HCT116 (cell line): ENCODE measurements at regions of chr5 and their contacts with region 1.

Region 1: DNA sequence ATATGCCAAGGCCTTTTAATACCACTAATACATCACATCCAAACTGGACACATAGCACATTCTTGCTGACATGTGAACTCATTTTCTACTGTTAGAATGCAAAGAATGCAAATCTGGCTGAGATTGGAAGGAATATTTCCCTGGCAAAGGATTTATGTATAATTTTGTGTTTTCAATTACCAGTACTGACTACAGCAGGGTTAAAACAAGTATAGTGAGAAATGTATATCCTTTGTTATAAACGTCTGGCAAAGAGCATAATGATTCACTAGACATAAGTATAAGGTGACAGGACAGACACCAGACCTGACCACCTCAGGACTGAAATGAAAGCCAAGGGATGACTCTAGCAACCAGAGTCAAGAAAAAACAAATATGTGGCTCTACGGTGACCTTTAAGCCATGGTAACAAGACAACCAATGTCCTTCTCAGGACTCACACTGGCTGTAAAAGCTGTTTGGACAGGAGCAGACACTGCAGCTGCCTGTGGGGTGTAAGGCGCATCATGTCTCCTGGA is 95.0 kb downstream of the MRPS27 start:
- DNase-seq: no peak
- ATAC-seq: no peak
- H3K4me3 ChIP-seq: no peak overlapping the region
- H3K27ac ChIP-seq: no peak overlapping the region
- H3K4me1 ChIP-seq: no peaks in the 10 kb centered on the region
- H3K27me3 ChIP-seq: no peaks in the 10 kb centered on the region
- CTCF ChIP-seq: no peak
- POLR2A ChIP-seq: no peak
- RAD21 ChIP-seq: no peak

Region 2: GRCh38 chr5:71563166-71563565 is 661.8 kb before region 1 on chr5:
- CTCF ChIA-PET with region 1: no interaction called
- POLR2A ChIA-PET with region 1: no interaction called
- RAD21 ChIA-PET with region 1: no interaction called
- intact Hi-C with region 1: loop called (anchors 10 kb)
- DNase-seq: no peak
- ATAC-seq: no peak
- H3K4me3 ChIP-seq: no peak overlapping the region
- H3K27ac ChIP-seq: no peak overlapping the region
- H3K4me1 ChIP-seq: no peaks in the 10 kb centered on the region
- H3K27me3 ChIP-seq: no peaks in the 10 kb centered on the region
- CTCF ChIP-seq: no peak
- POLR2A ChIP-seq: no peak
- RAD21 ChIP-seq: no peak

Region 3: GRCh38 chr5:72205431-72206009 is 19.5 kb before region 1 on chr5:
- CTCF ChIA-PET with region 1: no interaction called
- POLR2A ChIA-PET with region 1: no interaction called
- RAD21 ChIA-PET with region 1: no interaction called
- intact Hi-C with region 1: no loop called
- DNase-seq: no peak
- ATAC-seq: no peak
- H3K4me3 ChIP-seq: no peak overlapping the region
- H3K27ac ChIP-seq: no peak overlapping the region
- H3K4me1 ChIP-seq: peaks cover under 1 to 11% of the 10 kb centered on the region in 2 experiments; a peak in 3 of 4 replicates
- H3K27me3 ChIP-seq: no peaks in the 10 kb centered on the region
- CTCF ChIP-seq: no peak
- POLR2A ChIP-seq: no peak
- RAD21 ChIP-seq: no peak

Region 4: DNA sequence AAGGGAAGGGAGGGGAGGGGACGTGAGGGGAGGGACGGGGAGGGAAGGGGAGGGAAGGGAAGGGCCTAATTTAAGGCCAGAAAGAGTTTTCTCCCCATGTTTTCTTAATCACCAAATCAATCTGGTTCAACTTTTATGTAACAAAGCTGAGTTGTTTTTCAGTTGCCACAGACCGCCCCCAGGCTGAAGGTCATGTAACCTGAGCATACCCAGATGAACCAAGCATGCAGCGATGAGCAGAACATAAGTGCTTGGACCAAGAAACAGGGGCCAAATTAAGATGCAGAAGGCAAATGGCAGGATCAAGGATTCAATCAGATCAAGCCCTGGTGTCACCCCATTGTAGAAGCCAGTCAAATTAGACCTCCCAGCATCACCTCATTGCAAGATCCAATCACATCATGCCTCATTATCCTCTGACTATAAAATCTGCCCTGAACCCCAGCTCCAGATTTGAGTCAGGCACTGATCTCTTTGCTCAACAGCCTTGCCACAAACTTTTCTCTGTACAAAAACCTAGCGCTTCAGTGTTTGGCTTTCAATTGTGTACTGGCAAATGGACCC is 477.9 kb after region 1 on chr5:
- CTCF ChIA-PET with region 1: no interaction called
- POLR2A ChIA-PET with region 1: no interaction called
- RAD21 ChIA-PET with region 1: no interaction called
- intact Hi-C with region 1: no loop called
- DNase-seq: no peak
- ATAC-seq: no peak
- H3K4me3 ChIP-seq: no peak overlapping the region
- H3K27ac ChIP-seq: no peak overlapping the region
- H3K4me1 ChIP-seq: no peaks in the 10 kb centered on the region
- H3K27me3 ChIP-seq: no peaks in the 10 kb centered on the region
- CTCF ChIP-seq: no peak
- POLR2A ChIP-seq: no peak
- RAD21 ChIP-seq: no peak